Activated T-helper 1 cell treated with anti-CD3 and anti-CD28 coated beads, Interleukin-12 subunit alpha, Interleukin-12 subunit beta, Interleukin-2, Interleukin-4 antibody, amounts not matched to agents 30 ng/mL and 10 ng/mL and 1 ng/mL, durations not matched to agents 14 hours and 24 hours and 36 hours (primary cell): ENCODE measurements at regions of chr10 and their contacts with region 1.

Region 1: GRCh38 chr10:62732841-62733653 is 71.5 kb upstream of the ADO start:
- DNase-seq: peak; percentile 64
- H3K4me3 Mint-ChIP-seq: peak overlapping the region; percentile 72
- H3K27ac Mint-ChIP-seq: no peak overlapping the region
- H3K4me1 Mint-ChIP-seq: peaks cover 23% of the 10 kb centered on the region
- H3K27me3 Mint-ChIP-seq: no peaks in the 10 kb centered on the region

Region 2: DNA sequence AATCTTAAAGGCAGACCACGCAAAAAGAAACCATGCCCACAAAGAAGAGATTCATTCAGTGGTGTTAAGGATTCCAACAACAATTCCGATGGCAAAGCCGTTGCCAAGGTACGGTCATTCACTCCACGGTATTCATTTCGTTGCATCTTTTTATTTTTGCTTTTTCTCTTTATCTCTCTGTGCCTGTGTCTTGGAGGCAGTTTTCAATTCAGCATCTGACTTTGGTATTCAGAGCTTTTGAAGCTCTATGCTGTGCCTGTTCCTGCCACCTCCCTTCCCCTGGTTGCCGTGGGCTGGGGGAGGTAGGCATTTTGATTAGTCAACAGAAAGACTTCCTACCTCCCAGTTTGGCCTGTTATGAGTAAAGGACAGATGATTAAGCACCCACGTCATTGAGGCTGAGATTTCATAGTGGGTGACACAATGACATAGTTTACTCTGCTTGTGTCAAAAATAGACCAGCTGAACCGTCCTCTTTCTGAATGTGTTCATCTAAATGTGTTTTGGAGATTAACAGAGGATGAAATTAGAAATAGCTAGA is 682.1 kb before region 1 on chr10:
- intact Hi-C with region 1: loop called (anchors 5 kb)
- DNase-seq: peak; percentile 77
- H3K4me3 Mint-ChIP-seq: peak overlapping the region; percentile 96
- H3K27ac Mint-ChIP-seq: peak overlapping the region; percentile 99
- H3K4me1 Mint-ChIP-seq: peaks cover 86% of the 10 kb centered on the region
- H3K27me3 Mint-ChIP-seq: no peaks in the 10 kb centered on the region

Region 3: GRCh38 chr10:62610649-62611229 is 122.3 kb before region 1 on chr10:
- intact Hi-C with region 1: loop called (anchors 1 kb)
- DNase-seq: peak; percentile 65
- H3K4me3 Mint-ChIP-seq: no peak overlapping the region
- H3K27ac Mint-ChIP-seq: peak overlapping the region; percentile 11
- H3K4me1 Mint-ChIP-seq: peaks cover 59% of the 10 kb centered on the region
- H3K27me3 Mint-ChIP-seq: peaks cover 9% of the 10 kb centered on the region

Region 4: GRCh38 chr10:62749093-62749683 is 16.1 kb after region 1 on chr10:
- intact Hi-C with region 1: loop called (anchors 1 kb)
- DNase-seq: no peak
- H3K4me3 Mint-ChIP-seq: no peak overlapping the region
- H3K27ac Mint-ChIP-seq: peak overlapping the region; percentile 19
- H3K4me1 Mint-ChIP-seq: peaks cover 19% of the 10 kb centered on the region
- H3K27me3 Mint-ChIP-seq: peaks cover 3% of the 10 kb centered on the region

Region 5: DNA sequence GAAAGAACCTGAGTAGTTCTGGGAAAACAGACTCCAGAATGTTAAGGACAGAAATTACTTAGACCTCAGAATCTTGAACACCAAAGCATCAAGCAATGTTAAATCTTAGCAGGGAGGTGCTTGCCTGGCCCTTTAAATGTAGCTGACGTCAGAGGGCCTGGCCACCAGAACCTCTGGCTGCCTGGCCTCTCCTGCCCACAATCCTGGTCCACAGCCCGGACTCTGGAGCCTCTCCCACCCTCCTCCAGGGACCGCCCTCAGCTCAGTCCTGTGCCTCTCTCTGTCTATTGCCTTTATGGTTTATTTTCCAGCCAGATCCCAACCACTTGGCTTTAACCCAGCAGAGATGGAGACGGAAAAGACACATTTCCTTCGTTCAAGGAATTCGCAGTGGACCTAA is 125.3 kb after region 1 on chr10:
- intact Hi-C with region 1: loop called (anchors 1 kb)
- DNase-seq: no peak
- H3K4me3 Mint-ChIP-seq: no peak overlapping the region
- H3K27ac Mint-ChIP-seq: no peak overlapping the region
- H3K4me1 Mint-ChIP-seq: peaks cover 60% of the 10 kb centered on the region
- H3K27me3 Mint-ChIP-seq: peaks cover 6% of the 10 kb centered on the region

Region 6: GRCh38 chr10:63133056-63133820 is 400.2 kb after region 1 on chr10 and contains the start of gene NRBF2:
- intact Hi-C with region 1: loop called (anchors 1 kb)
- DNase-seq: peak; percentile 97
- H3K4me3 Mint-ChIP-seq: peak within 1 kb of the TSS; percentile 91
- H3K27ac Mint-ChIP-seq: peak within 1 kb of the TSS; percentile 83
- H3K4me1 Mint-ChIP-seq: peaks cover 32% of the 10 kb centered on the region
- H3K27me3 Mint-ChIP-seq: peaks cover 3% of the 10 kb centered on the region
- total RNA-seq, gene NRBF2: 30.0 and 30.8 TPM in 2 replicates